Transverse colon (tissue), 4 donors: ENCODE measurements at regions of chr5 and their contacts with region 1.

Region 1: DNA sequence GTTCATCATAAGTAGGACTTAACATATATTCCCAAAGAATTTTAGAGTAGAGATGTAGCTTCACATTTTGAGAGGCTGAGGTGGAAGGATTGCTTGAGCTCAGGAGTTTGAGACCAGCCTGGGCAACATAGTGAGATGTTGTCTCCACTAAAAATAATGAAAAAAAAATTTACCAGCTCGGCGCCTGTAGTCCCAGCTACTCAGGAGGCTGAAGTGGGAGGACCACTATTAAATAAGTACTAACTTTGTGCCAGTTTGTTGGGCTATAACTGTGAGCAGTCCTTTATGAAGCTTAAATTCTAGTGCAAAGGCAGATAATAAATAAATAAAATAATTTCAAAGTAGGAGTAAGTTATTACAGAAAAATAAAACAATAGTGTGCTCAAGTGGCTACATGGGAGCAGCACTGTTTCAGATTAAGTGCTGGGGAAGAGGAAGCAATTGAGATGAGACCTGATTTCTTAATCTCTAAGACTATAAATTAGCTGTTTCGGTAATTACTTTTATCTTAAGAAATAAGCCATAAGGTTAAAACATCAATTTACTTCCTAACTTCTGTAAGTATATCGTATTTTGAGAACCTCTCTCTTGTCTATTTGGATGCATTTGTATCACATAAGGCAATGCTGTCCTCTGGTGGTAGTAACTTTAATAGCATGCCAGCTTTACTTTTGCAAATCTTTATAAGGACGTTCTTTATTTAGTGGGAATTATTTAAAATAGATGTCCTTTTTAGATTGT is 98.9 kb downstream of the CSNK1G3 start:
- DNase-seq: no peak
- H3K4me3 ChIP-seq: no peak overlapping the region
- H3K27ac ChIP-seq: no peak overlapping the region
- H3K4me1 ChIP-seq: peaks cover 0 to 8% (median 2%) of the 10 kb centered on the region in 4 donors
- H3K27me3 ChIP-seq: no peaks in the 10 kb centered on the region
- CTCF ChIP-seq: peak; percentile 93 to 99 (median 97)
- EP300 ChIP-seq: no peak
- POLR2A ChIP-seq: no peak

Region 2: DNA sequence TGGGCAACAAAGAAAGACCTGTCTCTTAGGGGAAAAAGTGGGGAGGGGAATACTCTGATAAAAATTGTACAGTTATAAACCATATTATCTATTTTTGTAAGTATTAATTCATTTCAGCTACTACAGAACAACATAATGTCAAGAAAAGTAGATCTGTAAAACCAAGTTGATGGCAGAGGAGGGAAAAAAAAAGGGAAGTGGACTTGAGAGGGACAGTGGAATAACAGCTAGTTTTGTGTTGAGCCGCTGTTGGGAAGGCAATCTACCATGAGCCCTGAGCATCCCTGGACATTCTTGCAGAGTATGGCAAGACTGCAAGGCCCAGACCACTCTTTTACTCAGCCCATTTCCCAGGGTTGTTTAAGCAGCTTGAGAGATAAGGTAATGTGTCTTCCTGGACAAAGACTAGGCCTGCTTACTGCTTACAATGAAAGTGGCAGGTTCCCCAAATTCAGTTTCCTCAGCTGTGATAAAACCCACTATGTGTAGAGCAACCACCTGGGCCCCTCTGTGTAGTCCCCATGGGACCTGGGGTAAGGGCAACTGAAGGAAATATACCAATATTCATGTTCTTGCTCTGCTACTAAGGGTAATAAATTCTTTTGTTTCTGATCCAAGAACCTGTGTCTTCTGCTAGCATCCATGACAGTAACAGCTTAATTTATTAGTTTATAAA is 212.6 kb before region 1 on chr5:
- in situ Hi-C with region 1: loop called in 2 of 4 experiments (anchors 25 kb)
- intact Hi-C with region 1: no loop called
- DNase-seq: no peak
- H3K4me3 ChIP-seq: no peak overlapping the region
- H3K27ac ChIP-seq: no peak overlapping the region
- H3K4me1 ChIP-seq: no peaks in the 10 kb centered on the region
- H3K27me3 ChIP-seq: no peaks in the 10 kb centered on the region
- CTCF ChIP-seq: no peak
- EP300 ChIP-seq: no peak
- POLR2A ChIP-seq: no peak

Region 3: GRCh38 chr5:123423278-123424149 is 187.3 kb before region 1 on chr5 and contains the start of gene CEP120:
- in situ Hi-C with region 1: loop called in 1 of 4 experiments (anchors 25 kb)
- intact Hi-C with region 1: no loop called
- DNase-seq: peak; percentile 99
- H3K4me3 ChIP-seq: peak within 1 kb of the TSS; percentile 63 to 86 (median 83)
- H3K27ac ChIP-seq: peak within 1 kb of the TSS; percentile 93 to 95 (median 94)
- H3K4me1 ChIP-seq: peaks cover 3 to 27% (median 18%) of the 10 kb centered on the region in 4 donors
- H3K27me3 ChIP-seq: no peaks in the 10 kb centered on the region
- CTCF ChIP-seq: peak; percentile 60 to 94 (median 79)
- EP300 ChIP-seq: peak; percentile 45
- POLR2A ChIP-seq: peak; percentile 95
- total RNA-seq, gene CEP120: 7.6 to 24.3 (median 18.2) TPM

Region 4: GRCh38 chr5:123598028-123598689 is 12.7 kb before region 1 on chr5:
- in situ Hi-C with region 1: no loop called
- intact Hi-C with region 1: no loop called
- DNase-seq: no peak
- H3K4me3 ChIP-seq: no peak overlapping the region
- H3K27ac ChIP-seq: no peak overlapping the region
- H3K4me1 ChIP-seq: no peaks in the 10 kb centered on the region
- H3K27me3 ChIP-seq: no peaks in the 10 kb centered on the region
- CTCF ChIP-seq: no peak
- EP300 ChIP-seq: no peak
- POLR2A ChIP-seq: no peak